GM12878 (cell line): ENCODE measurements at regions of chr10 and their contacts with region 1.

Region 1: GRCh38 chr10:50275650-50276235 is 24.4 kb upstream of the ASAH2 start:
- DNase-seq: peak; percentile 25
- ATAC-seq: peak; percentile 95
- H3K4me3 ChIP-seq: no peak overlapping the region
- H3K27ac ChIP-seq: no peak overlapping the region
- H3K4me1 ChIP-seq: no peaks in the 10 kb centered on the region
- H3K27me3 ChIP-seq: peaks cover 0 to 5% of the 10 kb centered on the region in 2 experiments; a peak in 2 of 4 replicates
- CTCF ChIP-seq: peak; percentile 69 to 83 (median 75)
- EP300 ChIP-seq: no peak
- POLR2A ChIP-seq: no peak
- RAD21 ChIP-seq: peak; percentile 78

Region 2: GRCh38 chr10:50216894-50217293 is 58.8 kb before region 1 on chr10:
- CTCF ChIA-PET with region 1: interaction called, 11 read pairs
- POLR2A ChIA-PET with region 1: interaction called, 6 read pairs
- RAD21 ChIA-PET with region 1: interaction called, 6 read pairs
- SMC1A ChIA-PET with region 1: interaction called, 10 read pairs
- in situ Hi-C with region 1: no loop called
- intact Hi-C with region 1: no loop called
- DNase-seq: no peak
- ATAC-seq: peak; percentile 44
- H3K4me3 ChIP-seq: no peak overlapping the region
- H3K27ac ChIP-seq: no peak overlapping the region
- H3K4me1 ChIP-seq: no peaks in the 10 kb centered on the region
- H3K27me3 ChIP-seq: no peaks in the 10 kb centered on the region
- CTCF ChIP-seq: no peak
- EP300 ChIP-seq: no peak
- POLR2A ChIP-seq: no peak
- RAD21 ChIP-seq: no peak

Region 3: GRCh38 chr10:50231515-50232260 is 44.1 kb before region 1 on chr10:
- CTCF ChIA-PET with region 1: interaction called, 59 read pairs
- POLR2A ChIA-PET with region 1: no interaction called
- RAD21 ChIA-PET with region 1: interaction called, 9 read pairs
- SMC1A ChIA-PET with region 1: interaction called, 21 read pairs
- in situ Hi-C with region 1: no loop called
- intact Hi-C with region 1: no loop called
- DNase-seq: no peak
- ATAC-seq: peak; percentile 78
- H3K4me3 ChIP-seq: no peak overlapping the region
- H3K27ac ChIP-seq: no peak overlapping the region
- H3K4me1 ChIP-seq: no peaks in the 10 kb centered on the region
- H3K27me3 ChIP-seq: peaks cover 0 to 2% of the 10 kb centered on the region in 2 experiments; a peak in 2 of 4 replicates
- CTCF ChIP-seq: no peak
- EP300 ChIP-seq: peak; percentile 43 to 63; a peak in 2 of 4 replicates
- POLR2A ChIP-seq: no peak
- RAD21 ChIP-seq: no peak

Region 4: DNA sequence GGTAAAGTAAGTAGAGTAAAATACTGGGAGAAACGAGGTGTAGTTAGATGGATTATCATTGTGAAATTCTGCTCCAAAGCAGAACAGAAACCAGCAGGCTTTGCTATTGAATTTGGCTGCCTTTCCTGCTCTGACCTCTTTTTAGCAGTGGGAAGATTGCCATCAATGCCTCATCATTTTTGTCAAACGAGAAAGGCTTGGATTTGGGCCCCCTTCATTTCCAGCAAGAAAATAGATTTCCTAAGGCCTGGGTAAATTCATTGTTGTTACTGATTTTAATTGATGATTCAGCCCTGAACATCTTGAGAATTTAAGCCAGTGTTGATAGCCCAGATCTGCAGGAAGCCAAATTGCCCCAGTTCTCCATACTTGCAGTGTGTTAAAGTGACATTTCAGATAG is 10.8 kb after region 1 on chr10:
- CTCF ChIA-PET with region 1: interaction called, 5 read pairs
- POLR2A ChIA-PET with region 1: no interaction called
- RAD21 ChIA-PET with region 1: interaction called, 3 read pairs
- SMC1A ChIA-PET with region 1: interaction called, 13 read pairs
- in situ Hi-C with region 1: no loop called
- intact Hi-C with region 1: no loop called
- DNase-seq: no peak
- ATAC-seq: no peak
- H3K4me3 ChIP-seq: no peak overlapping the region
- H3K27ac ChIP-seq: no peak overlapping the region
- H3K4me1 ChIP-seq: no peaks in the 10 kb centered on the region
- H3K27me3 ChIP-seq: no peaks in the 10 kb centered on the region; a peak in 1 of 4 replicates
- CTCF ChIP-seq: no peak
- EP300 ChIP-seq: no peak
- POLR2A ChIP-seq: no peak
- RAD21 ChIP-seq: no peak